Heart right ventricle (tissue), 16 donors: ENCODE measurements at regions of chr16 and their contacts with region 1.

Region 1: GRCh38 chr16:88785106-88785924 is at the start of gene PIEZO1:
- DNase-seq: peak; percentile 72 to 81
- ATAC-seq: peak; percentile 37 to 75 (median 56)
- H3K4me3 ChIP-seq: peak within 1 kb of the TSS; percentile 53 to 83 (median 71)
- H3K27ac ChIP-seq: peak within 1 kb of the TSS; percentile 74 to 99 (median 90)
- H3K4me1 ChIP-seq: peaks cover 10 to 51% (median 40%) of the 10 kb centered on the region in 9 donors
- H3K27me3 ChIP-seq: peaks cover 0 to 9% (median 0%) of the 10 kb centered on the region in 7 donors
- CTCF ChIP-seq: peak; percentile 70 to 96 (median 91)
- total RNA-seq, gene PIEZO1: 12.3 to 38.0 (median 16.4) TPM

Region 2: GRCh38 chr16:88725609-88726407 is 59.5 kb before region 1 on chr16:
- intact Hi-C with region 1: no loop called
- DNase-seq: no peak
- ATAC-seq: no peak
- H3K4me3 ChIP-seq: no peak overlapping the region
- H3K27ac ChIP-seq: no peak overlapping the region
- H3K4me1 ChIP-seq: peaks cover 0 to 8% (median 0%) of the 10 kb centered on the region in 9 donors
- H3K27me3 ChIP-seq: no peaks in the 10 kb centered on the region
- CTCF ChIP-seq: no peak

Region 3: GRCh38 chr16:88737298-88738150 is 47.8 kb before region 1 on chr16:
- intact Hi-C with region 1: loop called in 9 of 10 experiments (anchors 1 to 5 kb)
- DNase-seq: peak; percentile 42 to 76
- ATAC-seq: peak; percentile 65 to 83 (median 76)
- H3K4me3 ChIP-seq: no peak overlapping the region
- H3K27ac ChIP-seq: no peak overlapping the region
- H3K4me1 ChIP-seq: peaks cover 0 to 10% (median 4%) of the 10 kb centered on the region in 9 donors
- H3K27me3 ChIP-seq: no peaks in the 10 kb centered on the region
- CTCF ChIP-seq: peak; percentile 95 to 99 (median 98)

Region 4: GRCh38 chr16:88743693-88744576 is 41.4 kb before region 1 on chr16:
- intact Hi-C with region 1: loop called (anchors 1 to 5 kb)
- DNase-seq: peak; percentile 78 to 87
- ATAC-seq: peak; percentile 43 to 71 (median 65)
- H3K4me3 ChIP-seq: peak overlapping the region in 2 of 10 donors; percentile 12 to 13
- H3K27ac ChIP-seq: peak overlapping the region in 8 of 10 donors; percentile 8 to 81 (median 51)
- H3K4me1 ChIP-seq: peaks cover 11 to 47% (median 33%) of the 10 kb centered on the region in 9 donors
- H3K27me3 ChIP-seq: no peaks in the 10 kb centered on the region
- CTCF ChIP-seq: peak; percentile 84 to 94 (median 89)

Region 5: DNA sequence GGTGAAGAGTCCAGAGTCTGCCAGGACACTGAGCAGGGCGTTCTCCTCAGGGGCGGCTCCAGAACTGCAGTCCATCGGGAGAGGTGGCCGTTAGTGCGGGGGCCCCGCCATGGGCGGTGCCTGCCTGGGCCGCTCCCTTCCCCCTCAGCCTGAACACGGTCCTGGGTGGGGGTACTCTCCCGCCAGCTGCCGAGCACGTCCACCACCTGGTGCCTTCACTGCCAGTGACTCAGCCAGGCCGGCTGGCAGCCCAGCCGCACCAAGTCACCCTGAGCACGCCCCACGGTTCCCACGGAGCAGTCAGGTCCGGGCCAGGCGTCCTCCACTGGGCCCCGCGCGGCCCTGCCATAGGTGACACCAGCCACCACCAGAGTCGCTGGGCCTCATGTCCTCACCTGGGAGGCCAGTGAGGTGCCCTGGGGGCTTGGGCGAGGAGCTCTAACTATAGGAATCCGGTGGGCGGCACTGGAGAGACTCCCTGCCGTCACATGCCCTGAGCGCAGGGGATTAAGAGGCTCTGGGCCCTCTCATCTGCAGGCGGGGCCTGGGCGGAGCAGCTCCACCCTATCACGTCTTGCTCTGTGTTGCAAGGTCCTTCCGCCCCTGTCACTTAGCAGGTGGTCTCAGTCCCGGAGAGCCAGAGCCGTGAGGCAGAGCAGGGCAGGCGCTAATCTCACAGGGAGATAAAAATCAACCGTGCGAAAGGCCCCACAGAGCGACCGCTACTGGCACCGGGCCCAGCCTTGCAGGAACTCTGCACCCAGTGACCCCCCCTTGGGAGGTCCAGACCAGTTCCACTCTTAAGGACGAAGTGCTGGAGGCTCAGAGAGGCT is 14.6 kb before region 1 on chr16:
- intact Hi-C with region 1: loop called in 1 of 10 experiments (anchors 1 kb)
- DNase-seq: peak; percentile 70 to 74
- ATAC-seq: peak in 7 of 8 donors; percentile 14 to 51 (median 23)
- H3K4me3 ChIP-seq: peak overlapping the region in 4 of 10 donors; percentile 9 to 24 (median 15)
- H3K27ac ChIP-seq: peak overlapping the region in 2 of 10 donors; percentile 16 to 32
- H3K4me1 ChIP-seq: peaks cover 33 to 84% (median 74%) of the 10 kb centered on the region in 9 donors
- H3K27me3 ChIP-seq: no peaks in the 10 kb centered on the region
- CTCF ChIP-seq: no peak